Activated CD8-positive, alpha-beta T cell treated with anti-CD3 and anti-CD28 coated beads for 36 hours (primary cell): ENCODE measurements at regions of chr11 and their contacts with region 1.

Region 1: DNA sequence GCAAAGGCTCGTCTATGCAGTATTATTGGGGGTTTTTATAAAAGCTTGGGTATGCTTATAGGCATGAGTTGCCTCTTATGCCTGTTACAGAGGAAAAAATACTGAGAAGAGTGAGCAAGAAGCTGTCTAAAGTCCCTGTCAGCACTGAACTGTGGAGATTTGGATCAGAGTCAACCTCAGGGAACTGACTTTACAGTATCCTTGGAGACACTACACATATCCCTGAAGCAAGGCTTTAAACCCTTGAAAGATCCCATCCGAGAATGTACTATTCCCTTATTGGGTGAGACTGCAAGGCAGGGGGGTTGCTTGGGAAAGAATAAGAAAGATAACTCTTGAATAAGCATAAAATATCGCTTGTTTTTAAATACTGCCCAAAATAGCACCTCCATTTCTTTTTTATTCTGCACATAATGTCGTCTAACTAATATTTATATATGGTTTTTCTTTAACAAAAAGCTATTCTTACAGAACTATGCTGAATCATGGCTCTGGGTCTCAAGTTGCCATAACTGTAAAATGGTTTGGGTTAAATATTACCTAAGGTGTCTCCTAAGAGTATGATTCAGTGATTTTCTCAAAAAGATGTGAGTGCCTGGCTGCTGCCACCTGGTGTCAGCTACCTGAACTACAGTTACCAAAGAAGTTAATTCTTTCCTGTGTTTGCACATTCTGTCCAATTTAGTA is 1062.8 kb downstream of the DLG2 start:
- DNase-seq: peak; percentile 43
- ATAC-seq: peak; percentile 34
- H3K4me3 Mint-ChIP-seq: no peak overlapping the region
- H3K27ac Mint-ChIP-seq: no peak overlapping the region
- H3K4me1 Mint-ChIP-seq: no peaks in the 10 kb centered on the region
- H3K27me3 Mint-ChIP-seq: no peaks in the 10 kb centered on the region
- CTCF ChIP-seq: peak; percentile 82

Region 2: GRCh38 chr11:83827940-83828554 is 736.3 kb before region 1 on chr11:
- CTCF ChIA-PET with region 1: no interaction called
- POLR2A ChIA-PET with region 1: no interaction called
- intact Hi-C with region 1: loop called (anchors 5 kb)
- DNase-seq: no peak
- ATAC-seq: peak; percentile 37
- H3K4me3 Mint-ChIP-seq: no peak overlapping the region
- H3K27ac Mint-ChIP-seq: no peak overlapping the region
- H3K4me1 Mint-ChIP-seq: no peaks in the 10 kb centered on the region
- H3K27me3 Mint-ChIP-seq: no peaks in the 10 kb centered on the region
- CTCF ChIP-seq: peak; percentile 59